ENCODE measurements at regions of chr17 and their contacts with region 1.

Region 1: GRCh38 chr17:49567871-49568694 is 7.6 kb upstream of the NXPH3 start:
- DNase-seq: peak; percentile 79
- H3K4me3 Mint-ChIP-seq: peak overlapping the region; percentile 56
- H3K27ac Mint-ChIP-seq: no peak overlapping the region
- H3K4me1 Mint-ChIP-seq: peaks cover 20% of the 10 kb centered on the region
- H3K27me3 Mint-ChIP-seq: peaks cover 24% of the 10 kb centered on the region
- CTCF ChIP-seq: peak; percentile 95

Region 2: GRCh38 chr17:49523706-49524472 is 44.2 kb before region 1 on chr17:
- CTCF ChIA-PET with region 1: no interaction called
- POLR2A ChIA-PET with region 1: no interaction called
- intact Hi-C with region 1: no loop called
- DNase-seq: peak; percentile 95
- H3K4me3 Mint-ChIP-seq: no peak overlapping the region
- H3K27ac Mint-ChIP-seq: peak overlapping the region; percentile 64
- H3K4me1 Mint-ChIP-seq: peaks cover 6% of the 10 kb centered on the region
- H3K27me3 Mint-ChIP-seq: peaks cover 7% of the 10 kb centered on the region
- CTCF ChIP-seq: no peak

Region 3: GRCh38 chr17:49694847-49695683 is 127.0 kb after region 1 on chr17:
- CTCF ChIA-PET with region 1: interaction called, 325 read pairs
- POLR2A ChIA-PET with region 1: interaction called, 4 read pairs
- intact Hi-C with region 1: loop called (anchors 1 kb)
- DNase-seq: peak; percentile 30
- H3K4me3 Mint-ChIP-seq: no peak overlapping the region
- H3K27ac Mint-ChIP-seq: no peak overlapping the region
- H3K4me1 Mint-ChIP-seq: no peaks in the 10 kb centered on the region
- H3K27me3 Mint-ChIP-seq: no peaks in the 10 kb centered on the region
- CTCF ChIP-seq: peak; percentile 92

Region 4: GRCh38 chr17:49779739-49780231 is 211.7 kb after region 1 on chr17:
- CTCF ChIA-PET with region 1: interaction called, 4 read pairs
- POLR2A ChIA-PET with region 1: no interaction called
- intact Hi-C with region 1: loop called (anchors 1 kb)
- DNase-seq: peak; percentile 58
- H3K4me3 Mint-ChIP-seq: no peak overlapping the region
- H3K27ac Mint-ChIP-seq: no peak overlapping the region
- H3K4me1 Mint-ChIP-seq: no peaks in the 10 kb centered on the region
- H3K27me3 Mint-ChIP-seq: no peaks in the 10 kb centered on the region
- CTCF ChIP-seq: peak; percentile 56

Region 5: GRCh38 chr17:49851387-49852291 is 283.6 kb after region 1 on chr17:
- CTCF ChIA-PET with region 1: no interaction called
- POLR2A ChIA-PET with region 1: no interaction called
- intact Hi-C with region 1: no loop called
- DNase-seq: peak; percentile 47
- H3K4me3 Mint-ChIP-seq: peak overlapping the region; percentile 65
- H3K27ac Mint-ChIP-seq: no peak overlapping the region
- H3K4me1 Mint-ChIP-seq: no peaks in the 10 kb centered on the region
- H3K27me3 Mint-ChIP-seq: peaks cover 45% of the 10 kb centered on the region
- CTCF ChIP-seq: peak; percentile 26